Naive thymus-derived CD4-positive, alpha-beta T cell (primary cell): ENCODE measurements at regions of chr22 and their contacts with region 1.

Region 1: GRCh38 chr22:29625090-29625825 is 21.8 kb downstream of the NF2 start:
- DNase-seq: peak in 7 of 9 donors; percentile 15 to 49 (median 40)
- ATAC-seq: peak; percentile 74
- H3K4me3 ChIP-seq: no peak overlapping the region
- H3K4me3 Mint-ChIP-seq: peak overlapping the region in 7 of 10 donors; percentile 2 to 64 (median 25)
- H3K27ac ChIP-seq: peak overlapping the region; percentile 73
- H3K27ac Mint-ChIP-seq: peak overlapping the region; percentile 63 to 89 (median 85)
- H3K4me1 ChIP-seq: peaks cover 0 to 39% of the 10 kb centered on the region in 2 donors
- H3K4me1 Mint-ChIP-seq: peaks cover 41 to 92% (median 85%) of the 10 kb centered on the region in 7 donors
- H3K27me3 ChIP-seq: no peaks in the 10 kb centered on the region
- H3K27me3 Mint-ChIP-seq: no peaks in the 10 kb centered on the region

Region 2: DNA sequence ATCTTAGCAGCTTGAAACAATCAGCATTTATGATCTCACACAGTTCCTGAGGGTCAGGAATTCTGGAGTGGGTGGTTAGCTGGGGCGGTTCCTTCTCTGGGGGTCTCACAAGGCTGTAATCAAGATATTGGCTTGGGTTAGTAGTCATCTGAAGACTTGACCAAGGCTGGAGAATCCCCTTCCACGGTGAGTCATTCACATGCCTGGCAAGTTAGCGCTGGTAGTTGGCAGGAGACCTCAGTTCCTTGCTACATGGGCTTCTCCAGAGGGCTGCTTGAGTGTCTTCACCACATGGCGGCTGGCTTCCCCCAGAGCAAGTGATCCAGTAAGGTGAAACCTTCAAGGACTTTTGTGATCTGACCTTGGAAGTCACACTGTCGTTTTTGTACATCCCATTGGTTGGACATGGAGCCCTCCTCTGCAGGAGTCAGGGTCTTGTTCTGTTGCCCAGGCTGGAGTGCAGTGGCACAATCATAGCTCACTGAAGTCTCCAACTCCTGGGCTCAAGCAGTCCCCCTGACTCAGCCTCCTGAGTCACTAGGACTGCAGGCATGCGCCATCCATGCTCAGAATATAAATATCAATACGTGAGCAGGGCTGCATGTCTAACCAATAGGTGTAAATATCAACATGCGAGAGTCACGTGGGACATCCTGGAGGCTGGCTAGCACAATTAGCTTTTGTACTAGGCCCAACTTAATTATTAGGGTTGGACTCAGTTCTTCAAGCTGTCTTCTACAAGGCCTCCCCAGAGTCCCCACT is 37.1 kb before region 1 on chr22:
- CTCF ChIA-PET with region 1: interaction called, 3 read pairs
- POLR2A ChIA-PET with region 1: interaction called, 6 read pairs
- intact Hi-C with region 1: loop called in 1 of 2 experiments (anchors 1 kb)
- DNase-seq: no peak
- ATAC-seq: no peak
- H3K4me3 ChIP-seq: no peak overlapping the region
- H3K4me3 Mint-ChIP-seq: no peak overlapping the region
- H3K27ac ChIP-seq: no peak overlapping the region
- H3K27ac Mint-ChIP-seq: peak overlapping the region in 5 of 9 donors; percentile 25 to 86 (median 71)
- H3K4me1 ChIP-seq: peaks cover 6 to 8% of the 10 kb centered on the region in 2 donors
- H3K4me1 Mint-ChIP-seq: peaks cover 4 to 11% (median 10%) of the 10 kb centered on the region in 7 donors
- H3K27me3 ChIP-seq: no peaks in the 10 kb centered on the region
- H3K27me3 Mint-ChIP-seq: no peaks in the 10 kb centered on the region